Activated B cell treated with CpG ODN at 0.5 μM for 24 hours (primary cell): ENCODE measurements at regions of chrX and their contacts with region 1.

Region 1: GRCh38 chrX:154762523-154763289 is at the start of gene DKC1:
- DNase-seq: peak; percentile 87
- ATAC-seq: peak; percentile 87
- H3K4me3 Mint-ChIP-seq: peak within 1 kb of the TSS; percentile 89
- H3K27ac Mint-ChIP-seq: peak within 1 kb of the TSS; percentile 92
- H3K4me1 Mint-ChIP-seq: peaks cover 17% of the 10 kb centered on the region
- H3K27me3 Mint-ChIP-seq: no peaks in the 10 kb centered on the region
- CTCF ChIP-seq: no peak
- total RNA-seq, gene DKC1: 93.5 and 105 TPM in 2 replicates

Region 2: GRCh38 chrX:154547245-154548027 is 215.3 kb before region 1 on chrX and contains the start of gene IKBKG:
- CTCF ChIA-PET with region 1: no interaction called
- POLR2A ChIA-PET with region 1: interaction called, 6 read pairs
- intact Hi-C with region 1: loop called (anchors 1 kb)
- DNase-seq: peak; percentile 86
- ATAC-seq: peak; percentile 81
- H3K4me3 Mint-ChIP-seq: peak within 1 kb of the TSS; percentile 86
- H3K27ac Mint-ChIP-seq: peak within 1 kb of the TSS; percentile 95
- H3K4me1 Mint-ChIP-seq: peaks cover 45% of the 10 kb centered on the region
- H3K27me3 Mint-ChIP-seq: no peaks in the 10 kb centered on the region
- CTCF ChIP-seq: no peak
- total RNA-seq, gene IKBKG: 52.9 and 61.1 TPM in 2 replicates

Region 3: DNA sequence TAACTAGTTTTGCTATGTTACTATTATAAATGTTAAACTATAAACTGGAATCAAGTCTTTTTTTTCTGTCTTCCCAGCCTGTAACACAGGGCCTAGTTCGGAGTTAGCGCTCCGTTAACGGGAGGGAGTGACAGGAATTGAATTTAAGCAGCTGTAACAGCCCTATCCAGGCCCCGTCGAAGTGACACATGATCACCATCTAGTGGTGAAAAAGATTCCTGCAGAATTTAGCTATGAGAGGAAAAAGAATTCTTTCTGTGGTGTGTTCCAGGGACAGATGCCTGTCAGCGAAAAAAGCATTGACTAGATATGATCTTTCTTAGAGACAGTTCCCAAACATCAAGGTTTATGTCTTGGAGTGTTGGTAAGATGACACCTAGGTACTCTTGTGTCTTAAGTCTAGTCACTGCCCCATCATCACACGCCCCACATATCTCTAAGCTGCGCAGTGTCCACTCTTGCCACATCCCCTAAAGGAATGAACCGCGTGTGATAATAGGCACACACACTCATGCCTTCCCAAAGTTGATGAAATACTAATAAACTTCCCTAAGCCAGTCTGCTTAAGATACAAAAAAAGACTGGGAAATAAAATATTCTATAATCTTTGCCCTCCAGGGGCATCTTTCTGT is 13.9 kb before region 1 on chrX:
- CTCF ChIA-PET with region 1: interaction called, 27 read pairs
- POLR2A ChIA-PET with region 1: interaction called, 22 read pairs
- intact Hi-C with region 1: loop called (anchors 1 kb)
- DNase-seq: no peak
- ATAC-seq: peak; percentile 51
- H3K4me3 Mint-ChIP-seq: no peak overlapping the region
- H3K27ac Mint-ChIP-seq: no peak overlapping the region
- H3K4me1 Mint-ChIP-seq: peaks cover 21% of the 10 kb centered on the region
- H3K27me3 Mint-ChIP-seq: no peaks in the 10 kb centered on the region
- CTCF ChIP-seq: peak; percentile 31

Region 4: GRCh38 chrX:154804957-154805695 is 42.4 kb after region 1 on chrX and contains the start of gene MPP1:
- CTCF ChIA-PET with region 1: no interaction called
- POLR2A ChIA-PET with region 1: interaction called, 7 read pairs
- intact Hi-C with region 1: loop called (anchors 1 kb)
- DNase-seq: peak; percentile 74
- ATAC-seq: peak; percentile 99
- H3K4me3 Mint-ChIP-seq: peak within 1 kb of the TSS; percentile 86
- H3K27ac Mint-ChIP-seq: peak within 1 kb of the TSS; percentile 66
- H3K4me1 Mint-ChIP-seq: peaks cover 12% of the 10 kb centered on the region
- H3K27me3 Mint-ChIP-seq: no peaks in the 10 kb centered on the region
- CTCF ChIP-seq: no peak
- total RNA-seq, gene MPP1: 5.8 and 7.2 TPM in 2 replicates

Region 5: DNA sequence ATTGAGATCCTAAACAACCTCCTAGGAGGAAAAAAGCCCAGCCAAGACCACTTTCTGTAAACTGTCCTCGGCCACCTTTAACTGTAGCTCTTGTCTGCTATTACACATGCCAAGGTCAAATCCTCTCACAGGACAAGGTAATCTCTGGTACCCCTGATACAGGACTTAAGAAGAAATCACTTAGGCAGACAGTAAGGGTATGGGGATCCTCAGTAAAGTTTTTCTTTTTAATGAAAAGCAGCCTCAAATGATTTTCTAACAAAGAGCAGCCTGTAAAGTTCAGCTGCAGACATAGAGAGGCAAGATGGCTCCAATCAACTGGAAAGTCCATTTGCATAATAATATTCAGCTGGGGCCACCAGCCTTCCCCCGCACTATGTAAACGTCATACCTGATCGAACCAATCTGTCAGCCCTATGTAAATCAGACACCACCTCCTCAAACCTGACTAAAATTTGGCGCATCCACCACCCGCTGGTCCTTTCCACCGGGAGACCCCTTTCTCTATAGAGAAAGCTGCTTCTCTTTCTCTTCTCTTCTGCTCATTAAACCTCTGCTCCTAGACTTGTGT is 57.1 kb after region 1 on chrX:
- CTCF ChIA-PET with region 1: no interaction called
- POLR2A ChIA-PET with region 1: interaction called, 7 read pairs
- intact Hi-C with region 1: loop called (anchors 1 kb)
- DNase-seq: no peak
- ATAC-seq: peak; percentile 95
- H3K4me3 Mint-ChIP-seq: peak overlapping the region; percentile 53
- H3K27ac Mint-ChIP-seq: peak overlapping the region; percentile 84
- H3K4me1 Mint-ChIP-seq: peaks cover 18% of the 10 kb centered on the region
- H3K27me3 Mint-ChIP-seq: no peaks in the 10 kb centered on the region
- CTCF ChIP-seq: no peak